WTC11 (cell line): ENCODE measurements at regions of chr18 and their contacts with region 1.

Region 1: DNA sequence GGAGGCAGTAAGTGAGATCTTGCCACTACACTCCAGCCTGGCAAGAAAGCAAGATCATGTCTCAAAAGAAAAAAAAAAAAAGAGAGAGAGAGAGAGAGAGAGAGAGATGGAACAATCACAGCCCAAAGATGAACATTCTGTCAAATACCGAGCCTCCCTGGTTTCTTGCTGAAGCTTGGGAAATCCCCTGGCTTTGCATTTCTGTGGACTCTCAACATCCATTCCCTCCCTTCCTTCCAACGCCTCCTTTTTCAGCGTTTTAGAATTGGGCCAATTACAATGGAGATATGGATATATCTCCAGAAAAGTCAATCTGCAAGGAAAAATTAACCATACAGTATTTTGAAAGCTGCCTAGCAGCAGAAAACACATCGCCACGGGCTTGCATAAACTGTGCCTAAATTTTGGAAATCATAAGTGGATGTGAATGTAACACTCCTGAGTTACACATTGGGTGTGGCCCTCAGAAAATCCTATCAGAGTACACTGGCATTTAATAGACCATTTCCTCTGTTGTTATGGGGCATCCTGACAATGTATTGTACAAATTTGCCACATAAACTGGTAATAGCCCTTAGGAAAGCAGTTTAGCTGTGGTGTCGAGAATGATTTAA is 67.2 kb upstream of the PHLPP1 start:
- DNase-seq: no peak
- ATAC-seq: no peak
- H3K4me3 Mint-ChIP-seq: no peak overlapping the region
- H3K27ac Mint-ChIP-seq: no peak overlapping the region
- H3K4me1 Mint-ChIP-seq: peaks cover 15% of the 10 kb centered on the region
- H3K27me3 Mint-ChIP-seq: no peaks in the 10 kb centered on the region
- CTCF ChIP-seq: no peak

Region 2: GRCh38 chr18:62625019-62625418 is 23.1 kb before region 1 on chr18:
- CTCF ChIA-PET with region 1: no interaction called
- POLR2A ChIA-PET with region 1: no interaction called
- DNase-seq: no peak
- ATAC-seq: no peak
- H3K4me3 Mint-ChIP-seq: no peak overlapping the region
- H3K27ac Mint-ChIP-seq: no peak overlapping the region
- H3K4me1 Mint-ChIP-seq: no peaks in the 10 kb centered on the region
- H3K27me3 Mint-ChIP-seq: no peaks in the 10 kb centered on the region
- CTCF ChIP-seq: no peak

Region 3: DNA sequence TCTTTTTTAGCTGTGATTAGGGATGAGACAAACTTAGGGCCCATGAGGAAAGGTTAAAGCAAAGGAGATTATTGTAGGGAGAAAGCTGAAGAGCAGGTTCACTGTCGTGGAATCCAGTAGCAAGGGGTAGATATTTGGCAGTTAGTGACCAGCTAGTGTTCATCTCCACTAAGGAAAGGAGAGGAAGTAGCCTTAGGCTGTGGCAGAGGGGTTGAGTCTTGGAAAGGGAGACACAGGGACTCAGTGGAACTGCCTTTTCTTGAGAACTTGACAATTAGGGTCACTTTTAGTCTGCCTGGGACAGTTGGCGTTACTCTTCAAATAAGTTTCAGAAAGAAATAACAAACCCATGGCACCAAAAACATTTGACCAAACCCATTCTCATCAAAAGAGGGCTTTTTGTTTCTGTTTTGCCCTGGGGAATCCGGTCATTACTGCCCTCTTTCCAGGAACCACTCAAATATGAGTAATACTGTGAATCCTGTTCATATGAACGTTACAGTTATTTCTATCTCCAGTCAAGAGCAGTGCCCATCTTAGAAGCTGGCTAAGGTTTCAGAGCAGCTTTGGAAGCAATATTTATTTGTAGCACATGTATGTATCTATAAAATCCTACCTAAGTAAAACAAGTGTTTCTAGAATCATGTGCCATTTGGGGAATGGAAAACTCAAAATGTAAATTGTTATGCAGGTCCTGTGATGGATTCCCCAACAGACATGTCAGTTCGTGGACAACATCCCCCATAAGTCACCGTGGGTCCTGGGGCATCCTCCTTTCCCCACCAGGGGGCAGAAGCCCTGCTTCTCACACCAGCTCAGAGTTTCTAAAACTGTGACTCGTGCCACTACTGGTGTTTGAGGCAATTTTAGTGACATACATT is 10.1 kb before region 1 on chr18:
- CTCF ChIA-PET with region 1: interaction called, 14 read pairs
- POLR2A ChIA-PET with region 1: no interaction called
- DNase-seq: peak; percentile 78
- ATAC-seq: peak; percentile 85
- H3K4me3 Mint-ChIP-seq: no peak overlapping the region
- H3K27ac Mint-ChIP-seq: peak overlapping the region; percentile 13; the same call in 1 of the 2 replicates
- H3K4me1 Mint-ChIP-seq: peaks cover 18% of the 10 kb centered on the region
- H3K27me3 Mint-ChIP-seq: no peaks in the 10 kb centered on the region
- CTCF ChIP-seq: peak; percentile 75